Mammary epithelial cell (primary cell): ENCODE measurements at regions of chr7 and their contacts with region 1.

Region 1: DNA sequence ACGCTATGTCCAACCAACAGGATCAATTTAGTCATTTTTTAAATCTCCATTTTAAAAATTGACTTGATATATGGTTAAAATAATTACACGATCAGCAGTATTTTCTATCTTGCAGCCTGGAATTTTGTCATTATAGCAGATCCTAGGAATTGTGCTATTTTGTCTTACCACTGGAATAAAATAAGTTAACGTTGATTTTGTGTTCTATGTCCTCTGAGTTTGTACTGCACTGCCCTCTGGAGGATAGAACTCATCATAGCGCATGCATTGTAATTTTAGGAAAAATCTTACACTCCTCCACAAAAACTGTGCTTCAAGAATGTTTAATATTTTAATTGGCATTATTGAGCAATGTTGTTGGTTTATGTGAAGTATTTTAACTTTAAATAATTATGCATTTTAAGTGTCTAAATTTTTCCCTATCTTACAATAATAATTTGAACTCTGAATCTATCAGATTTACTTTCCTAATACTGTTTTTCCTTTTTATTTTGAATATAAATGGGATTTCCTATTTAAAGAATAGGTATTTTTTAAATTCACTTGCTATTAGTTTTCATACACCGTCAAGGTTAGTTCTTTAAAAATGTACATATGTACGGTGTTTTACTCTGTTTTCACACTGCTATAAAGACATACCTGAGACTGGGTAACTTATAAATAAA is 220.1 kb downstream of the PPP1R3A start:
- DNase-seq: peak; percentile 16
- H3K4me3 ChIP-seq: no peak overlapping the region
- H3K27ac ChIP-seq: no peak overlapping the region
- H3K4me1 ChIP-seq: no peaks in the 10 kb centered on the region
- H3K27me3 ChIP-seq: no peaks in the 10 kb centered on the region
- CTCF ChIP-seq: peak; percentile 80 to 84

Region 2: DNA sequence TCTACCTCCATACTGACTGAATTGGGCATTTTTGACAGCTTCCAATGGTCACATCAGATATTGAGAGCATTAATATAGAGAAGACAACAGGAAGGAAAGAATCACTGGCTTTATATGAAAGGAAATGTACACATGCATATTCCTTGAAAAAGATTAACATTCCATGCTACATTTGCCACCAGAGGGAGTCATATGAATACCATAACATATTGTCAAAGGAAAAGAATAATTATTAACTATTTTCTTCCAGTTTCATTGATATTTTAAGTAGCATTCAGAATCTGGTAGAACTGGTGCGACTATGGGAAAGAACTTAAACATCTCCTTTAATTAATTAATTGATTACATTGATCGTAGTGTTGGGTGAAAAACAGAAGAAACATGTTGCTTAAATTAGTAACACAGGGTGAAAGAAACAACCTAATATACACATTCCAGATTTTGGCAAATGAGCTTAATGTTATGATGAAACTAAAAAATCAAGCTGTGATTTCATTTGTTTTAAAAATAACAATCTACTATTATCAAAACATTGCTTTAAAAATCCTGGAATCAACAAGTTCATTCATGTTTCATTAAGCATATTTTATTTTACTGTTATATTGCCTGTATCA is 683.5 kb before region 1 on chr7:
- CTCF ChIA-PET with region 1: no interaction called
- dilution Hi-C with region 1: no loop called
- in situ Hi-C with region 1: no loop called
- intact Hi-C with region 1: loop called (anchors 2 kb)
- DNase-seq: peak; percentile 27
- H3K4me3 ChIP-seq: no peak overlapping the region
- H3K27ac ChIP-seq: no peak overlapping the region
- H3K4me1 ChIP-seq: peaks cover 12% of the 10 kb centered on the region
- H3K27me3 ChIP-seq: no peaks in the 10 kb centered on the region
- CTCF ChIP-seq: peak; percentile 42 to 58

Region 3: GRCh38 chr7:113159746-113160339 is 538.8 kb before region 1 on chr7:
- CTCF ChIA-PET with region 1: no interaction called
- dilution Hi-C with region 1: no loop called
- in situ Hi-C with region 1: loop called in 1 of 2 experiments (anchors 25 kb)
- intact Hi-C with region 1: loop called (anchors 2 kb)
- DNase-seq: peak; percentile 21
- H3K4me3 ChIP-seq: no peak overlapping the region
- H3K27ac ChIP-seq: no peak overlapping the region
- H3K4me1 ChIP-seq: no peaks in the 10 kb centered on the region
- H3K27me3 ChIP-seq: no peaks in the 10 kb centered on the region
- CTCF ChIP-seq: peak; percentile 59 to 82

Region 4: GRCh38 chr7:113404245-113404644 is 294.4 kb before region 1 on chr7:
- CTCF ChIA-PET with region 1: interaction called, 5 read pairs
- dilution Hi-C with region 1: no loop called
- in situ Hi-C with region 1: loop called (anchors 10 to 25 kb)
- intact Hi-C with region 1: no loop called
- DNase-seq: no peak
- H3K4me3 ChIP-seq: no peak overlapping the region
- H3K27ac ChIP-seq: no peak overlapping the region
- H3K4me1 ChIP-seq: no peaks in the 10 kb centered on the region
- H3K27me3 ChIP-seq: no peaks in the 10 kb centered on the region
- CTCF ChIP-seq: peak; percentile 22 to 43

Region 5: DNA sequence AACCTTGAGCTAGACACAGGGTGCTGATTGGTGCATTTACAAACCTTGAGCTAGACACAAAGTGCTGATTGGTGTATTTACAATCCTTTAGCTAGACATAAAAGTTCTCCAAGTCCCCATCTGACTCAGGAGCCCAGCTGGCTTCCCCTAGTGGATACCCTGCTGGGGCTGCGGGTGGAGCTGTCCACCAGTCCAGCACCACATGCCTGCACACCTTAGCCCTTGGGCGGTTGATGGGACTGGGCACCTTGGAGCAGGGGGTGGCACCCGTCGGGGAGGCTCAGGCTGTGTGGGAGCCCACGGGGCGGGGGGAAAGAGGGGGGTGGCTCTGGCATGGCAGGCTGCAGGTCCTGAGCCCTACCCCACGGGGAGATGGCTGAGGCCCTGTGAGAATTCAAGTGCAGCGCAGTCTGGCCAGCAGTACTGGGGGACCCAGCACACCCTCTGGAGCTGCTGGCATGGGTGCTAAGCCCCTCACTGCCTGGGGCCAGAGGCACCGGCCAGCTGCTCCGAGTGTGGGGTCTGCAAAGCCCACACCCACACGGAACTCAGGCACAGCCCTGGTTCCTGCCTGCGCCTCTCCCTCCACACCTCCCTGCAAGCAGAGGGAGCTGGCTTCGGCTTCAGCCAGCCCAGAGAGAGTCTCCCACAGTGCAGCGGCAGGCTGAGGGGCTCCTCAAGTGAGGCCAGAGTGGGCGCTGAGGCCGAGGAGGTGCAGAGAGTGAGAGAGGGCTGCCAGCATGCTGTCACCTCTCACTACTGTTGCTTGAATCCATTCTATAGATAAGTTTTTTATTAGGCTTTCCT is 210.6 kb before region 1 on chr7:
- CTCF ChIA-PET with region 1: no interaction called
- dilution Hi-C with region 1: no loop called
- in situ Hi-C with region 1: no loop called
- intact Hi-C with region 1: loop called (anchors 2 kb)
- DNase-seq: no peak
- H3K4me3 ChIP-seq: no peak overlapping the region
- H3K27ac ChIP-seq: no peak overlapping the region
- H3K4me1 ChIP-seq: no peaks in the 10 kb centered on the region
- H3K27me3 ChIP-seq: no peaks in the 10 kb centered on the region
- CTCF ChIP-seq: no peak

Region 6: DNA sequence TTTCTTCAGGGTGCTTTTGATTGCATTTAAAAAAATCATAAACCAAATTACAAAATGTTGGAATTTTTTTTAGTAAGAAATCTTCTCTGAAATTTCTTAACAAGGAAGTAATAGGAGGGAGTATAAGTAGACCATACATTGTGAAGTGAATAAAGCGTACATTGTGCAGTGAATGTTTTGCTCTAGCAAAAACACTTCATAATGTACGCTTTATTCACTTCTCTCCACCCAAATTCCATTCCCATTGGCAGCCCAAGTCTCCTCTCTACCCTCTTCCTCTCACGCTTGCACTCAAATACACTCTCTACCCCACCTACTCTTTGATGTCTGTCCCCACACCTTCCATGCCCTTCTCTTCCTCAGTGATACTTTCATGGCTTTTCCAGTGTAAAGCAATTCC is 20.9 kb before region 1 on chr7:
- CTCF ChIA-PET with region 1: no interaction called
- dilution Hi-C with region 1: no loop called
- in situ Hi-C with region 1: no loop called
- intact Hi-C with region 1: no loop called
- DNase-seq: no peak
- H3K4me3 ChIP-seq: no peak overlapping the region
- H3K27ac ChIP-seq: no peak overlapping the region
- H3K4me1 ChIP-seq: no peaks in the 10 kb centered on the region
- H3K27me3 ChIP-seq: no peaks in the 10 kb centered on the region
- CTCF ChIP-seq: no peak